Activated CD4-positive, alpha-beta T cell treated with anti-CD3 and anti-CD28 coated beads for 36 hours (primary cell): ENCODE measurements at regions of chr4 and their contacts with region 1.

Region 1: GRCh38 chr4:183471946-183472708 is 27.7 kb downstream of the CDKN2AIP start:
- DNase-seq: peak; percentile 91
- ATAC-seq: peak; percentile 84
- H3K4me3 Mint-ChIP-seq: no peak overlapping the region
- H3K27ac Mint-ChIP-seq: no peak overlapping the region
- H3K4me1 Mint-ChIP-seq: no peaks in the 10 kb centered on the region
- H3K27me3 Mint-ChIP-seq: no peaks in the 10 kb centered on the region

Region 2: GRCh38 chr4:183602557-183603027 is 130.5 kb after region 1 on chr4:
- CTCF ChIA-PET with region 1: interaction called, 6 read pairs
- POLR2A ChIA-PET with region 1: no interaction called
- intact Hi-C with region 1: loop called (anchors 1 kb)
- DNase-seq: no peak
- ATAC-seq: no peak
- H3K4me3 Mint-ChIP-seq: no peak overlapping the region
- H3K27ac Mint-ChIP-seq: no peak overlapping the region
- H3K4me1 Mint-ChIP-seq: no peaks in the 10 kb centered on the region
- H3K27me3 Mint-ChIP-seq: peaks cover 2% of the 10 kb centered on the region

Region 3: GRCh38 chr4:183722731-183723560 is 250.8 kb after region 1 on chr4:
- CTCF ChIA-PET with region 1: interaction called, 4 read pairs
- POLR2A ChIA-PET with region 1: no interaction called
- intact Hi-C with region 1: loop called (anchors 2 kb)
- DNase-seq: peak; percentile 60
- ATAC-seq: peak; percentile 57
- H3K4me3 Mint-ChIP-seq: peak overlapping the region; percentile 56
- H3K27ac Mint-ChIP-seq: peak overlapping the region; percentile 10
- H3K4me1 Mint-ChIP-seq: peaks cover 12% of the 10 kb centered on the region
- H3K27me3 Mint-ChIP-seq: no peaks in the 10 kb centered on the region

Region 4: GRCh38 chr4:183876268-183876934 is 404.3 kb after region 1 on chr4:
- CTCF ChIA-PET with region 1: no interaction called
- POLR2A ChIA-PET with region 1: no interaction called
- intact Hi-C with region 1: no loop called
- DNase-seq: no peak
- ATAC-seq: no peak
- H3K4me3 Mint-ChIP-seq: no peak overlapping the region
- H3K27ac Mint-ChIP-seq: no peak overlapping the region
- H3K4me1 Mint-ChIP-seq: no peaks in the 10 kb centered on the region
- H3K27me3 Mint-ChIP-seq: no peaks in the 10 kb centered on the region

Region 5: GRCh38 chr4:184100297-184100885 is 628.3 kb after region 1 on chr4:
- CTCF ChIA-PET with region 1: no interaction called
- POLR2A ChIA-PET with region 1: no interaction called
- intact Hi-C with region 1: loop called in 1 of 2 experiments (anchors 2 kb)
- DNase-seq: peak; percentile 74
- ATAC-seq: peak; percentile 75
- H3K4me3 Mint-ChIP-seq: no peak overlapping the region
- H3K27ac Mint-ChIP-seq: no peak overlapping the region
- H3K4me1 Mint-ChIP-seq: peaks cover 3% of the 10 kb centered on the region
- H3K27me3 Mint-ChIP-seq: peaks cover 15% of the 10 kb centered on the region

Region 6: GRCh38 chr4:184168406-184169019 is 696.4 kb after region 1 on chr4:
- CTCF ChIA-PET with region 1: no interaction called
- POLR2A ChIA-PET with region 1: no interaction called
- intact Hi-C with region 1: loop called (anchors 1 to 2 kb)
- DNase-seq: peak; percentile 79
- ATAC-seq: peak; percentile 91
- H3K4me3 Mint-ChIP-seq: no peak overlapping the region
- H3K27ac Mint-ChIP-seq: no peak overlapping the region
- H3K4me1 Mint-ChIP-seq: peaks cover 2% of the 10 kb centered on the region
- H3K27me3 Mint-ChIP-seq: peaks cover 58% of the 10 kb centered on the region